ENCODE measurements at regions of chr1 and their contacts with region 1.

Region 1: GRCh38 chr1:208855403-208855802 is 611.2 kb upstream of the PLXNA2 start:
- DNase-seq: no peak

Region 2: DNA sequence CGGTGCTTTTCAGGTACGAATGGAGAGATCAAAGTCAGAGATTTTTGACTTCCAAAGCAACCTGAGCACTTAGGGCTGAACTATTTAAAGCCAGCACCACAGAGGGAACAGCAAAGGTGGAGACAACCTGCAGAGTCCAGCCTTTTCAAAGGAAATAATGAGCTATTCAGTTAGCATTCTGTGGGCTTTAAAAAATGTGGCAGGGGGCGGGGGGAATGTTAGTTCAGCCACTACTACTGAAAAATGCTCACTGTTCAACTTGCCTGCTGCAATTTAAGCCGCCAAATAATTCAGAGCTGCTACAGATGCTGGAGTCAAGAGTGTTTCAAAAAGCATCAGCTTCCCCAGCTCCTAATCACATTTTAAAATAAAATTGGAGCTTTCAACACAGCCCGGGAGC is 137.9 kb before region 1 on chr1:
- intact Hi-C with region 1: loop called in 1 of 2 experiments (anchors 10 kb)
- DNase-seq: no peak

Region 3: DNA sequence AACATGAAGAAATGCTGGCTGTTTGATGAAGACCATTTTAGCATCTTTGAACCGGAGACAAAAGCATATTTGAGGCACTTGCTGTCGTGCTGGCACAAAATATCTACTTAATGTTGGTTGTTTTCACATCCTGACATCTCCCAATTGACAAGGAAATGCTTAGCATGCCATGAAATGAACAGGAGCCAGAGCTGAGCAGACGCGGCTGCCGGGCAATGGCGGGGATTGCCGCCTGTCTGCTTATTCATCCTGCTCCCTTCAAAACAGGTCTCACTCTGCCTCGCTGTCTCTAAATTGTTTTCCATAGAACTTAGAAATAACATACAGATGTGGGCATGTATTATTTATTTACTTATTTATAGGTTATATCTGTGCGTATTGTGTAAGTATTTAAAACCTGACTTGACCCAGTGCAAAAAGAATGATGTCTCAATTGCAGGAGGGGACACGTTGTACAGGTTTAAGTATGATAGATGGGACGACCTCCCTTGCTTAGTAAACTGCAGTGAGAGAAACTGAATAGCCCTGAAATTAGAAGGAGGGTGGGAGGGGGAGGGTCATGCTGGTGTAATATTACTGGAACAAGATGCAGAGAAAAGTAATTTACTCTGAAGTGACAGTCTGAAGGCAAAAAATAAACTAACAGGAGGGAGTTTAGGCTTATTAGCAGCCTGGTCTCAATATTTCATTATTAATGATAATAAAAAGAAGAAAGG is 20.9 kb before region 1 on chr1:
- intact Hi-C with region 1: loop called in 1 of 2 experiments (anchors 2 kb)
- DNase-seq: no peak

Region 4: GRCh38 chr1:208934933-208935332 is 79.5 kb after region 1 on chr1:
- intact Hi-C with region 1: no loop called
- DNase-seq: no peak

Measured in posterior vena cava (tissue), 2 donors.